Tibial artery (tissue), 4 donors: ENCODE measurements at regions of chr4 and their contacts with region 1.

Region 1: GRCh38 chr4:152779513-152780266 is at the starts of genes ARFIP1 and TIGD4:
- DNase-seq: peak; percentile 97 to 99
- H3K4me3 ChIP-seq: peak within 1 kb of the TSS; percentile 65 to 79
- H3K27ac ChIP-seq: peak within 1 kb of the TSS; percentile 89 to 96
- H3K4me1 ChIP-seq: peaks cover 0 to 46% (median 10%) of the 10 kb centered on the region in 4 donors
- H3K27me3 ChIP-seq: no peaks in the 10 kb centered on the region
- CTCF ChIP-seq: no peak

Region 2: DNA sequence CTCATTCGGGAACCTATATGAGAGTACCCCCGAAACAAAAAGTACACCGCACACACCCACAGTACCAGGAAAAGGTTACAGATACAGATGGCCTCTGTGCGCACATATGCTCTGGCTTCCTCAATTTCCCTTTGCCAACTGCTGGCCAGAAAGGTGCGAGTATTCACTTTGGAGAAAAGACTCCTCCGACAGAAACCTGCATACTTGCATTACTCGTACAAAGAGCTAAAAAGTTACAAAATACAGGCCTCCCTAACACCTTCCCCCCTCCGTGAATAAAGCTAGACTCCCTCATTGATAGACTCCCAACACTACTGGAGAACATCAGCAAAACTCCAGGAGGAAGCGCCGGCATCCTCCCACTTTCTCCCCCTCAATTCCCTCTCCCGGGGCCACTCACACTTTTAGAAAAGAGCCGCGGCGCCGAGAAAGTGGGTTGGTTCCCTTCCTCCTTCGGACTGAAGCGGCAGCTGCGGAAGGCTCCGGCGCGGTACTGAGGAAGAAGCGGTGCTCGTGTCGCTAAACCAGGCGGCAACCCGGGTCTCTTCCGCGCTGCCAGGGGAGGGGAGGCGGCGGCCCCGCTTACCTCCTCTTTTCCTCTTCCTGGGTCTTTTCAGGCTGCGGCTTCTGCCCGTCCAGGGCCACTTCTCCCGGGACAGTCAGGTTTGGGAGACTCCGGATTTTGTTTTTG is 245.0 kb before region 1 on chr4:
- intact Hi-C with region 1: loop called (anchors 5 kb)
- DNase-seq: peak; percentile 31 to 70
- H3K4me3 ChIP-seq: peak overlapping the region; percentile 73 to 80
- H3K27ac ChIP-seq: peak overlapping the region; percentile 87 to 92
- H3K4me1 ChIP-seq: peaks cover 0 to 46% (median 31%) of the 10 kb centered on the region in 4 donors
- H3K27me3 ChIP-seq: no peaks in the 10 kb centered on the region
- CTCF ChIP-seq: no peak

Region 3: DNA sequence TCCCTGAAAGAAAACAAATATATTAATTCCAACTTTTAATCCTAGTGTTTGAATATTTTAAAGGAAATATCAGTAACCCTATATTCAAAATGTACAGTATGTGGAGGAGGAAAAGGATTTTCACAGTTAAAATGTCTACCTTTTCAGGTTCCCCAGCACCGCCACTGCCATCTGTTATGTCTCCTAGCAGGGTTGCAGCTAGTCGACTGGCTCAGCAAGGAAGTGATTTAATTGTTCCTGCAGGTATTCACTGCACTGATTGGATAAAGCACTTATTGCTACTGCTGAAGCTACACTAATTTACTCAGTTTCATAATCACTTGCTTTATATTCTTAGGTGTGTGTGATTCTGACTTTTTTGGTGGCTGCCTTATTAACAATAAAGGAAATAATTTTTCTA is 90.9 kb after region 1 on chr4:
- intact Hi-C with region 1: no loop called
- DNase-seq: no peak
- H3K4me3 ChIP-seq: no peak overlapping the region
- H3K27ac ChIP-seq: no peak overlapping the region
- H3K4me1 ChIP-seq: no peaks in the 10 kb centered on the region
- H3K27me3 ChIP-seq: no peaks in the 10 kb centered on the region
- CTCF ChIP-seq: no peak